Activated CD4-positive, alpha-beta T cell treated with anti-CD3 and anti-CD28 coated beads, Interleukin-2, amount 10 ng/mL, durations not matched to agents 24 days and 14 days (primary cell): ENCODE measurements at regions of chr11 and their contacts with region 1.

Region 1: GRCh38 chr11:130314750-130315285 is at the start of gene ZBTB44:
- DNase-seq: peak; percentile 95
- H3K4me3 Mint-ChIP-seq: peak within 1 kb of the TSS; percentile 96
- H3K27ac Mint-ChIP-seq: peak within 1 kb of the TSS; percentile 98
- H3K4me1 Mint-ChIP-seq: peaks cover 30% of the 10 kb centered on the region
- H3K27me3 Mint-ChIP-seq: peaks cover 1% of the 10 kb centered on the region
- total RNA-seq, gene ZBTB44: 33.1 and 36.0 TPM in 2 replicates

Region 2: GRCh38 chr11:130002846-130003716 is 311.7 kb before region 1 on chr11:
- intact Hi-C with region 1: loop called (anchors 2 kb)
- DNase-seq: peak; percentile 97
- H3K4me3 Mint-ChIP-seq: peak overlapping the region; percentile 98
- H3K27ac Mint-ChIP-seq: peak overlapping the region; percentile 100
- H3K4me1 Mint-ChIP-seq: peaks cover 18% of the 10 kb centered on the region
- H3K27me3 Mint-ChIP-seq: peaks cover 3% of the 10 kb centered on the region

Region 3: GRCh38 chr11:130213143-130213978 is 101.5 kb before region 1 on chr11:
- intact Hi-C with region 1: loop called (anchors 2 kb)
- DNase-seq: peak; percentile 93
- H3K4me3 Mint-ChIP-seq: no peak overlapping the region
- H3K27ac Mint-ChIP-seq: no peak overlapping the region
- H3K4me1 Mint-ChIP-seq: no peaks in the 10 kb centered on the region
- H3K27me3 Mint-ChIP-seq: peaks cover 2% of the 10 kb centered on the region

Region 4: GRCh38 chr11:130249371-130249770 is 65.4 kb before region 1 on chr11:
- intact Hi-C with region 1: no loop called
- DNase-seq: no peak
- H3K4me3 Mint-ChIP-seq: no peak overlapping the region
- H3K27ac Mint-ChIP-seq: no peak overlapping the region
- H3K4me1 Mint-ChIP-seq: peaks cover 20% of the 10 kb centered on the region
- H3K27me3 Mint-ChIP-seq: no peaks in the 10 kb centered on the region

Region 5: DNA sequence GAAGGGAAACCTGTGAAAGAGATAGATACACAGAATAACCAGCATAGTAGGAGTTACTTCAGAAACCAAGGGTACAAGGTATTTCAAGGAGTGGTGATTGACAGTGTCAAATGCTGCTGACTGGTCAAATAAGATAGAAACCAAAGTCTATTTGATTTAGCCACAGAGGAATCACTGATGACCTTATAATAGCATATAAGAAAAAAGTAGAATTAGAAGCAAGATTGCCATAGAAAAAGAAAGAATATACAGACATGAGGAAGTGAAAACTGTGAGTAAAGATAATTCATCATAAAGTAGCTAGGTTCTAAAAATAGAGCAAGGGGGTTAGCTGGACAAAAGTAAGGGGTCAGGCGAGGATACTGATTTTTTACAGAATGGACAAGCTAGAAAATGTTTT is 14.3 kb before region 1 on chr11:
- intact Hi-C with region 1: no loop called
- DNase-seq: no peak
- H3K4me3 Mint-ChIP-seq: no peak overlapping the region
- H3K27ac Mint-ChIP-seq: no peak overlapping the region
- H3K4me1 Mint-ChIP-seq: peaks cover 22% of the 10 kb centered on the region
- H3K27me3 Mint-ChIP-seq: no peaks in the 10 kb centered on the region

Region 6: DNA sequence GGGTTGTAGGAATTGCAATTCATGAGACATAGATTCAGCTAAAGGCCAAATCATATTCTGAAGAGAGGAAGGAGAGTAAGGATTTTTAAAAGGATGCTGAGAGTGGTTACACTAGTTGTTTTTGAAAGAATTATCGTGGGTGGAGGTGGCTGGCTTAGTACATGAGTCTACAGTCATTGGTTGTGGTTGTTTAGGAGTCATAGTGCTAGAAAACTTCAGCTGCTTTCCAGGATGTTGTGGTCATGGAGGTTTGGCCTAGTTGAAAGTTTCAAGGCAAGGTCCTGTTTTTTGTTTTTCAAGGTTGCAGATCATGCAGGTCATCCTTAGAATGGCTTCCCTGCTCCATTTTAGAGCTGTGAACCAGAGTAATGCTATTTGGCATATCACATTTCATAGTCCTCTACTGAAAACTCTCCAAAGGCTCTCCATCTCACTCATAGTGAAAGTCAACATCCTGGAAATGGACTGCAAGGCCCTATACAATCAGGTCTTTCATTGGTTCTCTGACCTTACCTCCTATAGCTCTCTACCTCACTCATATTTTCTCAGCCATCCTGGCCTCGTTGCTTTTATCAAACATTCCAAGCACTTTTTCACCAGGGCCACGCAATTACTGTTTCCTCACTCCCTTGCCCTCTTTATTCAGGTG is 26.0 kb after region 1 on chr11:
- intact Hi-C with region 1: loop called (anchors 1 kb)
- DNase-seq: peak; percentile 84
- H3K4me3 Mint-ChIP-seq: peak overlapping the region; percentile 20
- H3K27ac Mint-ChIP-seq: peak overlapping the region; percentile 81
- H3K4me1 Mint-ChIP-seq: peaks cover 16% of the 10 kb centered on the region
- H3K27me3 Mint-ChIP-seq: no peaks in the 10 kb centered on the region